ENCODE measurements at regions of chr15 and their contacts with region 1.

Region 1: DNA sequence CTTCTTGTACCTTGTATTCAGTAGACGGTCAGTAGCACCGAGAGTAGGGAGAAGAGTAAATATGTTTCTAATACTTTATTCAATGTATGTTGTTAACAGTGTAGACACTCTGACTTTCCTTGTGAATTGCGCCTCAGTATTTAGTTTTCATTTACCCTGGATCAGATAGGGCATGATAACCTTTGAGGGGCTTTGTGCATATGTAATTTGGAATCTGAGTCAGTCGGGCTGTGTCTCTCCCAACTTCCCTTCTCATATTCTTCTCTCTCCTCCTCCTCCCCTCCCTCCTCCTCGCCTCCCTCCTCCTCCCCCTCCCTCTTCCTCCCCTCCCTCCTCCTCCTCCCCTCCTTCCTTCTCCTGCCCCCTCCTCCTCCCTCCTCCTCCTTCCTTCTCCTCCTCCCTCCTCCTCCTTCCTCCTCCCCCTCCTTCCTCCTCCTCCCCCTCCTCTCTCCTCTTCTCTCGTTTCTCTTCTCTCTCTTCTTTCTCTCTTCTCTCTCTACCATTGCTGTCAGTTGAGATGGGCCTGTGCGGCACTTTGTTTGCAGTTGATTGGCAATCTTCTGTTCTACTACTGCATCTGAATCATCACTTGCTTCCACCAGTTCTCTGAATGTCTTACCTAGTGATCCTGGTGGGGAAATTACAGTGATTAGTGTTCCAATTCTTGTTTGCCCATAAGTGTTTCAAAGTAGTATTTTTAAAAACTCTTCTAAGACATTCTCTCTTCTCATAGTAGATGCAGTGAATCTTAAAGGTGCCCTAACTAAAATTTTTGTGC is 162.3 kb downstream of the PGPEP1L start:
- DNase-seq: no peak
- ATAC-seq: no peak
- H3K4me3 ChIP-seq: no peak overlapping the region
- H3K27ac ChIP-seq: no peak overlapping the region
- H3K4me1 ChIP-seq: peaks cover 52% of the 10 kb centered on the region
- H3K27me3 ChIP-seq: no peaks in the 10 kb centered on the region
- CTCF ChIP-seq: no peak
- POLR2A ChIP-seq: no peak

Region 2: GRCh38 chr15:98799461-98800390 is 45.6 kb before region 1 on chr15:
- intact Hi-C with region 1: loop called (anchors 10 kb)
- DNase-seq: peak in 2 of 4 donors; percentile 38 to 43
- ATAC-seq: peak; percentile 20
- H3K4me3 ChIP-seq: no peak overlapping the region
- H3K27ac ChIP-seq: peak overlapping the region; percentile 19 to 84 (median 80)
- H3K4me1 ChIP-seq: peaks cover 64% of the 10 kb centered on the region
- H3K27me3 ChIP-seq: no peaks in the 10 kb centered on the region
- CTCF ChIP-seq: no peak
- POLR2A ChIP-seq: no peak

Region 3: GRCh38 chr15:98937413-98938104 is 92.3 kb after region 1 on chr15:
- intact Hi-C with region 1: no loop called
- DNase-seq: no peak
- ATAC-seq: no peak
- H3K4me3 ChIP-seq: no peak overlapping the region
- H3K27ac ChIP-seq: no peak overlapping the region
- H3K4me1 ChIP-seq: peaks cover 33% of the 10 kb centered on the region
- H3K27me3 ChIP-seq: no peaks in the 10 kb centered on the region
- CTCF ChIP-seq: no peak
- POLR2A ChIP-seq: no peak

Region 4: GRCh38 chr15:98966091-98966787 is 120.9 kb after region 1 on chr15:
- intact Hi-C with region 1: no loop called
- DNase-seq: no peak
- ATAC-seq: no peak
- H3K4me3 ChIP-seq: no peak overlapping the region
- H3K27ac ChIP-seq: no peak overlapping the region
- H3K4me1 ChIP-seq: no peaks in the 10 kb centered on the region
- H3K27me3 ChIP-seq: no peaks in the 10 kb centered on the region
- CTCF ChIP-seq: no peak
- POLR2A ChIP-seq: no peak